Activated CD4-positive, alpha-beta memory T cell treated with anti-CD3 and anti-CD28 coated beads for 36 hours (primary cell): ENCODE measurements at regions of chr14 and their contacts with region 1.

Region 1: GRCh38 chr14:80954687-80955299 is 628 bp upstream of the TSHR start:
- DNase-seq: peak; percentile 79
- H3K4me3 Mint-ChIP-seq: peak overlapping the region; percentile 73
- H3K27ac Mint-ChIP-seq: no peak overlapping the region
- H3K4me1 Mint-ChIP-seq: peaks cover 32% of the 10 kb centered on the region
- H3K27me3 Mint-ChIP-seq: peaks cover 8% of the 10 kb centered on the region

Region 2: DNA sequence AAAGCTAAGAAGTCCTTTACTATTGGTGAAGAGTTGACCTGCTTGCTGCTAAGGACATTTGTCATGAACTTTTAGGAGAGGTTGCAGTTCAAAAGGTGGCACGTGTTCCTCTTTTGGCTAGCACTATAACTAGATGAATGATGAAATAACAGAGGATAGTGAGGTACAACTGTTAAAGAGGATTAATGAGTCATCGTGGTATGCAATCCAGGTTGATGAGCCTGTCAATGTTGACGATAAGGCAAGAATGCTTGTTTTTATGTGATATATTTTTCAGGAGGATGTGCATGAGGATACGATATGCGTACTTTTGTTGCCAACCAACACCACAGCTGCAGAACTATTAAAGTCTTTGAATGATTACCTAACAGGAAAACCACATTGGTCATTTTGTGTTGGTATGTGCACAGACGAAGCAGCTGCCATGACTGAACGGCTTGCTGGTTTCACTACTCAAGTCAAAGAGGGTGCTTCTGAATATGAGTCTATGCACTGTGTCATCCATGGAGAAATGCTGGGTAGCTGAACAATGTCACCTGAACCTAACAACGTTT is 23.9 kb before region 1 on chr14:
- CTCF ChIA-PET with region 1: no interaction called
- POLR2A ChIA-PET with region 1: no interaction called
- intact Hi-C with region 1: loop called (anchors 1 kb)
- DNase-seq: peak; percentile 80
- H3K4me3 Mint-ChIP-seq: peak overlapping the region; percentile 54
- H3K27ac Mint-ChIP-seq: peak overlapping the region; percentile 82
- H3K4me1 Mint-ChIP-seq: peaks cover 41% of the 10 kb centered on the region
- H3K27me3 Mint-ChIP-seq: no peaks in the 10 kb centered on the region

Region 3: GRCh38 chr14:80987235-80988032 is 32.6 kb after region 1 on chr14:
- CTCF ChIA-PET with region 1: interaction called, 112 read pairs
- POLR2A ChIA-PET with region 1: interaction called, 3 read pairs
- intact Hi-C with region 1: loop called (anchors 1 kb)
- DNase-seq: peak; percentile 72
- H3K4me3 Mint-ChIP-seq: no peak overlapping the region
- H3K27ac Mint-ChIP-seq: no peak overlapping the region
- H3K4me1 Mint-ChIP-seq: no peaks in the 10 kb centered on the region
- H3K27me3 Mint-ChIP-seq: peaks cover 9% of the 10 kb centered on the region

Region 4: GRCh38 chr14:81062816-81063215 is 108.0 kb after region 1 on chr14:
- CTCF ChIA-PET with region 1: no interaction called
- POLR2A ChIA-PET with region 1: no interaction called
- intact Hi-C with region 1: loop called (anchors 2 kb)
- DNase-seq: peak; percentile 19
- H3K4me3 Mint-ChIP-seq: no peak overlapping the region
- H3K27ac Mint-ChIP-seq: no peak overlapping the region
- H3K4me1 Mint-ChIP-seq: no peaks in the 10 kb centered on the region
- H3K27me3 Mint-ChIP-seq: peaks cover 3% of the 10 kb centered on the region

Region 5: DNA sequence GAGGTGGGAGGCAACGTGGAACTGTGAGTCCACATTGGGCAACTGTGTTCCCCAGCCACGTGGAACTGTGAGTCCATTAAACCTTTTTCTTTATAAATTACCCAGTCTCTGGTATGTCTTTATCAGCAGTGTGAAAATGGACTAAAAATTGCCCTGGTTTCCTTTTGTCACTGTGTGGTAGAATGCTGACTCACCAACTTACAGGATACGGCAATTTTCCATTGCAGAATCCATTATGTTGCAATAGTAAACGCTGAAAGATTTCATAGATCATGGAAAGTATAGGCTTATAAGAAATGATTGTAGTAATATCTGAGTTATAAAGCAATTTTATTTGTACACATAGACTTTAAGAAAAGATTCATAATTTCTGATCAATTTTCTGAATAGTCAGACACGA is 173.0 kb after region 1 on chr14:
- CTCF ChIA-PET with region 1: no interaction called
- POLR2A ChIA-PET with region 1: no interaction called
- intact Hi-C with region 1: no loop called
- DNase-seq: no peak
- H3K4me3 Mint-ChIP-seq: no peak overlapping the region
- H3K27ac Mint-ChIP-seq: no peak overlapping the region
- H3K4me1 Mint-ChIP-seq: no peaks in the 10 kb centered on the region
- H3K27me3 Mint-ChIP-seq: no peaks in the 10 kb centered on the region

Region 6: GRCh38 chr14:81164167-81164774 is 209.5 kb after region 1 on chr14:
- CTCF ChIA-PET with region 1: interaction called, 13 read pairs
- POLR2A ChIA-PET with region 1: no interaction called
- intact Hi-C with region 1: no loop called
- DNase-seq: peak; percentile 83
- H3K4me3 Mint-ChIP-seq: no peak overlapping the region
- H3K27ac Mint-ChIP-seq: no peak overlapping the region
- H3K4me1 Mint-ChIP-seq: peaks cover 10% of the 10 kb centered on the region
- H3K27me3 Mint-ChIP-seq: no peaks in the 10 kb centered on the region

Region 7: DNA sequence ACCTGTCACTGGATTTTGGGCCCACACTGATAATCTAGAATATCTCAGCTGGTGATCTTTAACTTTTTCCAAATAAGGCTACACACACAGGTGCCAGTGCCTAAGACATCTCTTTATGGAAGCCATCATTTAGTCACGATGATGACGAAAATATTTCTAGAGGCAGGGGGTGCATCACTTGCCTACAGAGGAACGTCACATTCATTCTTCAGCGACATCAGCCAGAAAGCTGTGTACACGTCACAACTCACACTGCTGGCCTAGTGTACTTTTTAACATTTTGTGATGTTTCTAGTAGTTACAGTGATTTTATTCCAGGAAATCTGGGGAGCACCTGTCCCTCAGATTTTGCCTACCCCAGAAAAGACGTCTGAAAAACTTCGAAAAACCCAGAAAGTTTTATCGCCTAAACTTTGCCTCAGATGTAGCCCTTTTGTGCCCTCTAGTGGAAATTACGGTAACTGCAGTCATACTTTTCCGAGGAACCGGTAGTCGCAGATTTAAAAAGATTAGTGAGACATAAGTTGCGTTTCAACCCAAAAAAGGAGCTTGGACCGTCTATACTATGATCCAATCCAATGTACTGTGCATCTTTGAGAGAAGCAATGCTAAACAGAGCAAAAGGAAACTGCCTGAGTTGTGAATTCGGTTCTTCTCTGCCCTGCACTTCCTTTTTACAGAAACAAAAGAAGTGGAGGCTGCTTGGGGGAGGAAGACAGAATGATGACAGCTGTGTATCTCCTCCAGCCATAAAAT is 509.6 kb after region 1 on chr14:
- CTCF ChIA-PET with region 1: interaction called, 4 read pairs
- POLR2A ChIA-PET with region 1: no interaction called
- intact Hi-C with region 1: loop called (anchors 2 kb)
- DNase-seq: peak; percentile 52
- H3K4me3 Mint-ChIP-seq: peak overlapping the region; percentile 73
- H3K27ac Mint-ChIP-seq: peak overlapping the region; percentile 63
- H3K4me1 Mint-ChIP-seq: peaks cover 3% of the 10 kb centered on the region
- H3K27me3 Mint-ChIP-seq: peaks cover 1% of the 10 kb centered on the region